ENCODE measurements at regions of chr17 and their contacts with region 1.

Region 1: GRCh38 chr17:74457146-74457819 is 9.2 kb upstream of the CD300A start:
- DNase-seq: peak; percentile 73
- ATAC-seq: peak; percentile 45
- H3K4me3 Mint-ChIP-seq: no peak overlapping the region
- H3K27ac Mint-ChIP-seq: no peak overlapping the region
- H3K4me1 Mint-ChIP-seq: peaks cover 6% of the 10 kb centered on the region
- H3K27me3 Mint-ChIP-seq: peaks cover 13% of the 10 kb centered on the region
- CTCF ChIP-seq: no peak

Region 2: DNA sequence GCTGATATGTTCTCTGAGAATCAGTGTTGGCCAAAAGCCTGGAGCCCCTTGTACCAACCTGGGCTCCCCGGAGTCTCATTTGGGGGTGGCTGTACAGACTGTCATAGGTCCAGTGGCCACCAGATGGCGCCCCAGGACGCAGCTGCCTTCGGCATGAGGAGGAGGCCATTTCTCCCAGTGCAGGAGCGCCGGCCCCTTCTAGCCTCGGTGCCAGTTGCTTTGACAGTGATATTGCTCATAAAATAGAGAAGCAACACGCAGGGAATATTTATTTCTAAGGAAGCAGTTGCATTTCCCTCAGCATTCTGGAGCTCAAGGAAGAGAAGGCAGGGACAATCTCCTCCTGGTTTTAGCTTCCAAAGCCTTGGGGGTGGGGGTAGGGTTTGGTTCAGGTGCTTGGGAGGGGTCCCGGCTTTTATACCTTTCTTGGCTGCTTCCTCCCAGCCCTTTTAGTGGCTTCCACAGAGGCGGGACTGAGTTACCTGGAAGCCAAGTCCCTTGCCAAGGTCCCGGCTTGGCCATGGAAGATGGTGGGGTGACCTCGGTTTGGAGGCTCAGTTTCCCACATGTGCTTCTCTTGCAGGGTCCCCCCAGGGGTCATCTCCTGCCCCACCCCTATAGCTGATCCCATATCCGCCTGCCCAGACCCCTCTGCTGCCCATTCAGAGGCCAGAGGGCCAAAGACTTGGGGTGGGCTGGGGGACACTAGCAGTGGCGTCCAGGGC is 1027.7 kb before region 1 on chr17:
- CTCF ChIA-PET with region 1: no interaction called
- POLR2A ChIA-PET with region 1: no interaction called
- intact Hi-C with region 1: loop called (anchors 10 kb)
- DNase-seq: peak; percentile 80
- ATAC-seq: peak; percentile 97
- H3K4me3 Mint-ChIP-seq: no peak overlapping the region
- H3K27ac Mint-ChIP-seq: no peak overlapping the region
- H3K4me1 Mint-ChIP-seq: peaks cover 10% of the 10 kb centered on the region
- H3K27me3 Mint-ChIP-seq: peaks cover 2% of the 10 kb centered on the region
- CTCF ChIP-seq: peak; percentile 97

Region 3: GRCh38 chr17:74212913-74213791 is 244.1 kb before region 1 on chr17 and contains the start of gene TTYH2:
- CTCF ChIA-PET with region 1: interaction called, 7 read pairs
- POLR2A ChIA-PET with region 1: no interaction called
- intact Hi-C with region 1: loop called (anchors 1 kb)
- DNase-seq: peak; percentile 66
- ATAC-seq: peak; percentile 77
- H3K4me3 Mint-ChIP-seq: peak within 1 kb of the TSS; percentile 86
- H3K27ac Mint-ChIP-seq: peak within 1 kb of the TSS; percentile 89
- H3K4me1 Mint-ChIP-seq: peaks cover 48% of the 10 kb centered on the region
- H3K27me3 Mint-ChIP-seq: no peaks in the 10 kb centered on the region
- CTCF ChIP-seq: no peak
- total RNA-seq, gene TTYH2: 2.9 and 3.8 TPM in 2 replicates

Region 4: DNA sequence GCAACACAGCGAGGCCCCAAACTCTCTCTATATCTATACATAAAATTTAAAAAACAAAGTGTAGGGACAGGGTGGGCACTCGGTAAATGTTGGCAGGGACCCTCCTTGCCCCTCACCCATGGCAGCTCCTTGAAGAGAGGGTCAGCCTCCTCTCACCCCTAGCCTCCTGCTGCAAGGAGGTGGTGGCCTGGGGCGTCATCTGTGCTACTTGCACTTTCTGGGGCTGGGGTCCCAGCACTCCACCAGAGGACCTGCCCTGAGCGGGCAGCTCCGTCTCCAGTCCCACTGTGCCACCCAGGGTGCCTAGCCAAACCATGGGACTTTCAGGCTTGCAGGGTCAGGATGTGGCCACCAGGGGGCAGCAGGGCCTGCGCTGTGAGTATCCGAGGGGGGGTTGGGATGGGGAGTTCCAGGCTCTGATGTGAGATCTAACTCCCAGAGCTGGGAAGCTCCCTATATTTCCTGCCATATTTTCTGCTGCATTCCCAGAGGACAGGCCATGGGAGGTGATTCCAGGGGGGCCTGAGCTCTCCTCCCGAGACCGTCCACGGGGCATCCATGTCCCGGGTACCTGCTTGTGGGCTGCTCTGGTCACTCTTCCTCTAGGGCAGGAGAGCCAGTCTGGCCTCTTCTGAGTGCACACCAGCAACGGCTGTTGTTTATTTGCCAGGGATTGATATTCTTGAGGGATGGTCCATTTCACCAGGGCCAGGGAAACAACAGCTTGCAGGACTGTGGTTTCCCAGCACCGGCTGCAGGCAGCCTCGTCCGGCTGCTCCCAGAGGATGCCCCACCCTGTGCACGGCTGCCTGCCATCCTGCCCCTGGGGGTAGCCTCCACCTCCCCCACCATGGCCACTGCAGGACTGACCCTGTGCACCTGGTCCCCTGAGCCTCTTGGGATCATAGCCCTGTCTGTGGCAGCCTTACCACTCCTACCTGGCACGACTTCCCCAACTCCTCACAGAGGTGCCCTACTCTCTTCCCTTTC is 88.9 kb before region 1 on chr17:
- CTCF ChIA-PET with region 1: interaction called, 55 read pairs
- POLR2A ChIA-PET with region 1: interaction called, 13 read pairs
- intact Hi-C with region 1: loop called (anchors 1 kb)
- DNase-seq: peak; percentile 64
- ATAC-seq: peak; percentile 77
- H3K4me3 Mint-ChIP-seq: no peak overlapping the region
- H3K27ac Mint-ChIP-seq: no peak overlapping the region
- H3K4me1 Mint-ChIP-seq: peaks cover 14% of the 10 kb centered on the region
- H3K27me3 Mint-ChIP-seq: peaks cover 17% of the 10 kb centered on the region
- CTCF ChIP-seq: peak; percentile 58

Region 5: GRCh38 chr17:74410001-74410443 is 47.3 kb before region 1 on chr17:
- CTCF ChIA-PET with region 1: interaction called, 4 read pairs
- POLR2A ChIA-PET with region 1: no interaction called
- intact Hi-C with region 1: loop called (anchors 5 kb)
- DNase-seq: no peak
- ATAC-seq: no peak
- H3K4me3 Mint-ChIP-seq: no peak overlapping the region
- H3K27ac Mint-ChIP-seq: no peak overlapping the region
- H3K4me1 Mint-ChIP-seq: peaks cover 7% of the 10 kb centered on the region
- H3K27me3 Mint-ChIP-seq: peaks cover 10% of the 10 kb centered on the region
- CTCF ChIP-seq: no peak

Region 6: DNA sequence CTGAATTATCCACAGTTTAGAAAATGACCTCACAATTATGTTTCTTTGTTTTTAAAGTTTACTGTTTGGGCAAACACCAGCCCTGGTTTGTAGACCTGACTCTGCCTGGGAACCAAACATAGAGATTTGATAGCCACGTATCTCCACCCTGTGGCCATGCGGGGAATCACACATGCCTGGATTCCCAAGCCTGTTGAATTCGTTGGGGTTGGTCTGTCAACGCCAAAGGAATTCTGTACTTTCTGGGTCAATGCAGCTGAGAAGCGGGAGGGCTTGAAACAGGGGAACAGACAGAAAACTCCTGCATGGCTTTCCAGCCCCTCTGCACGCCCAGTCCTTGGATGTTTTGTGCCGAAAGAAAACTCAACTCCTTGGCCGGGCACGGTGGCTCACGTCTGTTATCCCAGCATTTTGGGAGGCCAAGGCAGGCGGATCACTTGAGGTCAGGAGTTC is 36.1 kb after region 1 on chr17:
- CTCF ChIA-PET with region 1: interaction called, 4 read pairs
- POLR2A ChIA-PET with region 1: no interaction called
- intact Hi-C with region 1: loop called (anchors 1 kb)
- DNase-seq: peak; percentile 42
- ATAC-seq: peak; percentile 75
- H3K4me3 Mint-ChIP-seq: no peak overlapping the region
- H3K27ac Mint-ChIP-seq: no peak overlapping the region
- H3K4me1 Mint-ChIP-seq: no peaks in the 10 kb centered on the region
- H3K27me3 Mint-ChIP-seq: peaks cover 3% of the 10 kb centered on the region
- CTCF ChIP-seq: peak; percentile 62

Region 7: GRCh38 chr17:74601944-74602572 is 144.8 kb after region 1 on chr17:
- CTCF ChIA-PET with region 1: interaction called, 4 read pairs
- POLR2A ChIA-PET with region 1: no interaction called
- intact Hi-C with region 1: loop called (anchors 5 kb)
- DNase-seq: no peak
- ATAC-seq: no peak
- H3K4me3 Mint-ChIP-seq: no peak overlapping the region
- H3K27ac Mint-ChIP-seq: no peak overlapping the region
- H3K4me1 Mint-ChIP-seq: peaks cover 53% of the 10 kb centered on the region
- H3K27me3 Mint-ChIP-seq: peaks cover 6% of the 10 kb centered on the region
- CTCF ChIP-seq: no peak